ENCODE measurements at regions of chr3 and their contacts with region 1.

Region 1: GRCh38 chr3:134373994-134374790 is at the start of gene AMOTL2:
- DNase-seq: peak; percentile 95
- H3K4me3 ChIP-seq: peak within 1 kb of the TSS; percentile 98
- H3K27ac ChIP-seq: peak within 1 kb of the TSS; percentile 100
- H3K27me3 ChIP-seq: no peaks in the 10 kb centered on the region
- CTCF ChIP-seq: no peak
- polyA plus RNA-seq, gene AMOTL2: 74.5 and 78.9 TPM in 2 replicates

Region 2: DNA sequence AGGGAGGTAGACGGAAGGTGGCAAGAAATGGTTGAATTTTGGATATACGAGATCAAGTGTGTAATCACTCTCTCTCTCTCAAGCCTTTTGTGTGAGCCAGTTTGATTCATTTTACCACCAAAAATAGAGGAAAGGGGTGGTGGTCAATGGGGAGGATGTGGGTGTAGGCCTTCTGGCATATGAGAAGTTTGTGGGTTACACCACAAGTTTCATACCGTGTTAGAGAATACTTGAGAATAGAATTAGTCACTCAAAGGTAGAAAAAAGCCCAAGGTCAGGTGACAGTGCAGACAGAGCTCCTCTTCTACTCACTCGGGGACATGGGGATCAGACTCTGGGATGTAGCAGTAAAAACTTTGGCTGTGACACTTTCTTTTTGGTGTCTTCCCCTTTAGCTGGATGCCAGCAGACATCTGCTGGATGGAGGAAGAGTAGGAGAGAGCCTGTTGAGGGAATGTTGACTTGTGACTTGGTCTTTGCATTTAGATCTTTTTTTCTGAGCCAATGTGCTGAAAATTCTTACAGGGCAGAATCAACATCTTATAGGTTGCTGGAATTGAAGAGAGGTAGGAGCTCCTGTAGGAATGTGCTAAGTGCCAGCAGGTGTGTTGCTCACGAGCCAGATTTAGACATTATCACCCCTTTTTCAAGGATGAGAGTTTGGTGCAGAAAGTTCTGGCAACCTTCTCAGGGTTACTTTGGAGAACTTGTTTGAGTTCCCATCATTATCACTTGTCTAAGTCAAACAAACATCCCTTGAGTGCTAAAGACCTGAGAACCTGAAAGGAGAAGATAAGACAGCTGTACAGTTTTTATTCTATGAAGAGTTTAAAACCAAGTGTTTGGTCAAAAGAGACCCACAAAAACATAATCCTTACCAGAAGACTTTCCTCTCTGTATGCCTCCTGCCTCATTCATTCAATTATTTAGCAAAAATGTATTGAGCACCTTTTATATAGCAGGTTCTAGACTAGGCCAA is 79.6 kb before region 1 on chr3:
- CTCF ChIA-PET with region 1: no interaction called
- POLR2A ChIA-PET with region 1: no interaction called
- DNase-seq: no peak
- H3K4me3 ChIP-seq: no peak overlapping the region
- H3K27ac ChIP-seq: no peak overlapping the region
- H3K27me3 ChIP-seq: no peaks in the 10 kb centered on the region
- CTCF ChIP-seq: no peak

Region 3: DNA sequence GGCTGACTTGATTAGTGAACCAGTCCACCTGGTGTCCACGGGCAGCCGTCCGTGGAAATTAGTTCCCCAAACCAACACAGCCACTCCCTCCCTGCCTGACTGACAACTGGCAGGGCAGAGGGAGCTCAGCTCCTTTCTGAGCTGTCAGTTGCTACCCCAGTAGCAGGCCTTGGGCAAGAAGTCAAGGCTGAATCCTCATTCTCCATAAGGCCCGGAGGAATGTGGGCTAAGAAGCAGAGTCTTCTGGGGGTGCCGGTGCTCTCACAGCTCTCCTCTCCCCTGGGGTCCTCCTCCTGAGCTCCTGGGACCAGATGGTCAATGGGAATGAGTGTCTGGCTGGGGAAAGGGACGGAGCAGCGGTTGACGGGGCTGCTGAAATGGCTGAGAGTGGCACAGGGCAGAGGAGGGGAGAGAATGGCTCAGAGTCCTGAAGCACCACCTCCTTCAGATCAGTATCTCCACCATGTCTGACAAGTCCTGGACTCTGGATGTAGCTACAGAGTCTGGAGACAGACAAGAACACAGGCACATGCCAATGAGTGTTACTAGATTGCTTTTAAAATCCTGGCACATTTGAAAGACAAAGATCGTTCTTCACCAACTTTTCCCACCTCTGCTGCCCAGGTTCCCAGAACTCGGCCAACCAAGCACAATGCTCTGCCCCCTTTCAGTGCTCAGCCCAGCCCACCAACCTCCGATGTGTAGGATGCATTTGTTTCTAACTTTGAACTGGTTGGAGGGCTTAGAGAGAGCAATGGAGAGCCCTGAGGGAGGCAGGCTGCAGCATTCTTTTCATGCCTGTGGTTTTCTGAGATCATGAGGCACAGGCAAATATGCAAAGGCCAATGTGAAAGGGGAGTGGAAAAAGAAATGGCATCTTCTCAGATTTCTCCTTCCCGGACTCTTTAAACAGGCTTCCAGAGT is 16.7 kb before region 1 on chr3:
- CTCF ChIA-PET with region 1: no interaction called
- POLR2A ChIA-PET with region 1: interaction called, 53 read pairs
- DNase-seq: peak; percentile 96
- H3K4me3 ChIP-seq: peak overlapping the region; percentile 13
- H3K27ac ChIP-seq: peak overlapping the region; percentile 98
- H3K27me3 ChIP-seq: no peaks in the 10 kb centered on the region
- CTCF ChIP-seq: no peak

Region 4: GRCh38 chr3:134427400-134428145 is 53.4 kb after region 1 on chr3:
- CTCF ChIA-PET with region 1: no interaction called
- POLR2A ChIA-PET with region 1: interaction called, 40 read pairs
- DNase-seq: peak; percentile 99
- H3K4me3 ChIP-seq: no peak overlapping the region; the same call in 1 of the 2 replicates
- H3K27ac ChIP-seq: peak overlapping the region; percentile 98
- H3K27me3 ChIP-seq: no peaks in the 10 kb centered on the region
- CTCF ChIP-seq: 0 out of 2 replicates have a peak, but pooled peaks have one; percentile 5

Region 5: GRCh38 chr3:134464064-134464697 is 90.0 kb after region 1 on chr3:
- CTCF ChIA-PET with region 1: interaction called, 3 read pairs
- POLR2A ChIA-PET with region 1: interaction called, 22 read pairs
- DNase-seq: peak; percentile 96
- H3K4me3 ChIP-seq: peak overlapping the region; percentile 30
- H3K27ac ChIP-seq: peak overlapping the region; percentile 96
- H3K27me3 ChIP-seq: no peaks in the 10 kb centered on the region
- CTCF ChIP-seq: no peak

Region 6: GRCh38 chr3:134485718-134486576 is 111.8 kb after region 1 on chr3 and contains the starts of genes ANAPC13 and CEP63:
- CTCF ChIA-PET with region 1: interaction called, 4 read pairs
- POLR2A ChIA-PET with region 1: interaction called, 10 read pairs
- DNase-seq: peak; percentile 98
- H3K4me3 ChIP-seq: peak within 1 kb of the TSS; percentile 87
- H3K27ac ChIP-seq: peak within 1 kb of the TSS; percentile 97
- H3K27me3 ChIP-seq: no peaks in the 10 kb centered on the region
- CTCF ChIP-seq: no peak
- polyA plus RNA-seq, gene ANAPC13: 122 and 176 TPM in 2 replicates
- polyA plus RNA-seq, gene CEP63: 11.0 and 16.3 TPM in 2 replicates